ENCODE measurements at regions of chr9 and their contacts with region 1.

Region 1: DNA sequence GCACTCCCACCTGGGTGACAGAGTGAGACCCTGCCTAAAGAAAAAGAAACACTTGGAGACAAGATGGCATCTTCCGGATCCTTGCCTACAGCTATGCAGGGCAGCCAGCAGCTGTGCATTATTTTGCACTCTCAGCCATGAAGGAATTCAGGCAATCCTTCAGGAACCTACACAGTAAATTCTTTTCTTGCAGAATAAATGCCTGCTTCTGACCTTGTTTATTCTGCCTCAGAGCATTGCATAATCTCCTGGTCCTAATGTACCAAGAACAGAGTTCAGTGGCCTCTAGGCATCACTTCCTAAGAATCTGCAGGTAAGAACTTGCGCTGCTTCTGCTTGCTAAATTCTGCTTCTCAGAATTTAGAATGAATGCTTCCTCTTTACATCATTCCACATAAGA is 16.8 kb downstream of the GLDC start:
- DNase-seq: peak; percentile 39 to 57
- H3K4me3 ChIP-seq: no peak overlapping the region
- H3K4me3 Mint-ChIP-seq: no peak overlapping the region
- H3K27ac Mint-ChIP-seq: peak overlapping the region; percentile 47
- H3K4me1 ChIP-seq: peaks cover 62% of the 10 kb centered on the region
- H3K4me1 Mint-ChIP-seq: peaks cover 44% of the 10 kb centered on the region
- H3K27me3 ChIP-seq: no peaks in the 10 kb centered on the region
- H3K27me3 Mint-ChIP-seq: no peaks in the 10 kb centered on the region
- CTCF ChIP-seq: no peak

Region 2: GRCh38 chr9:6592231-6592630 is 36.5 kb before region 1 on chr9:
- CTCF ChIA-PET with region 1: no interaction called
- POLR2A ChIA-PET with region 1: no interaction called
- intact Hi-C with region 1: loop called (anchors 1 kb)
- DNase-seq: peak; percentile 78 to 86
- H3K4me3 ChIP-seq: no peak overlapping the region
- H3K4me3 Mint-ChIP-seq: peak overlapping the region; percentile 30
- H3K27ac Mint-ChIP-seq: peak overlapping the region; percentile 71
- H3K4me1 ChIP-seq: peaks cover 46% of the 10 kb centered on the region
- H3K4me1 Mint-ChIP-seq: peaks cover 58% of the 10 kb centered on the region
- H3K27me3 ChIP-seq: no peaks in the 10 kb centered on the region
- H3K27me3 Mint-ChIP-seq: no peaks in the 10 kb centered on the region
- CTCF ChIP-seq: no peak

Region 3: DNA sequence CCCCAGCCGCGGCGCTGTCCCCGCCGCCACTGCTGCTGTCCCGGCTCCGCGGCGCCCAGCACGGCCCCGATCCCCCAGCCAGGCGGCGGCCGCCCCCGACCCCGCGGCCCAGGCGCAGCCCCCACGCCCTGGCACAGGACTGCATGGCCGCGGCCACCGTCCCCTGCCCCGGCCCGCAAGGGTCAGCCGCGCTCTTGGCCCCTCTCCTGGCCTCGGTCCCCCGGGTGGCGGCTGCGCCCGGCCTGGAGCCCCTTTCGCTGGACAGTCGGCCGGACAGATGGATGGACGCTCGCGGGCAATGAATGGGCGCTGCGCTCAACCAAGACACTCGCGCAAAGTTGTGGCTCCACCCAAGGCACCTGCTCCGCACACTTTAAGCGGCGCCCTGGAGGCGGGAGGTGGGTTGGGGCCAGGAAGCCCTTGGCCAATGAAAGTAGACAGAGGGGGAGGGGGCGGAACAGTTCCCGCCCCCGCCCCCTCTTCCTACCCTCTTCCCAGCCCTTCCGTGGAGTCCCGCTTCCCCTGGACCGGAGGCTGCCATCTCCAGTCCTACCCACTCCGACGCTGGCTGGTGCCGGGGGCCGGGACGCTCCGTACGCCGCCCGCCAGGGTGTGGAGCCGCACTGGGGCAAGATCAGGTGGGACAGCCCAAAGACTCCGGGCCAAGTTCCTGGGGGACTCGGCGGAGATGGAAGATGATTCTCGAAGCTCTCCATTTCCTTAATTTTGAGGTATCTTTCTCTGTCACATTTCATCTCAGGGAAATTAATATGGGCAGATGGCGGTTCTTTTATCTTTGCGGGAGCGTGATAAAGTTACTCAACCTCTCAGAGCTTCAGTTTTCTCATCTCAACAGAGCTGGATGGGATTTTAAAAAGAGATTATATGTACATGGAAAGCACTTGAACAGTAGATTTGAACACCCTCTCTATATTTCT is 16.9 kb after region 1 on chr9 and contains the start of gene GLDC:
- CTCF ChIA-PET with region 1: no interaction called
- POLR2A ChIA-PET with region 1: no interaction called
- intact Hi-C with region 1: loop called (anchors 1 kb)
- DNase-seq: peak; percentile 91 to 94
- H3K4me3 ChIP-seq: peak within 1 kb of the TSS; percentile 70
- H3K4me3 Mint-ChIP-seq: peak within 1 kb of the TSS; percentile 92
- H3K27ac Mint-ChIP-seq: peak within 1 kb of the TSS; percentile 88
- H3K4me1 ChIP-seq: peaks cover 31% of the 10 kb centered on the region
- H3K4me1 Mint-ChIP-seq: peaks cover 28% of the 10 kb centered on the region
- H3K27me3 ChIP-seq: no peaks in the 10 kb centered on the region
- H3K27me3 Mint-ChIP-seq: no peaks in the 10 kb centered on the region
- CTCF ChIP-seq: no peak
- total RNA-seq, gene GLDC: 276 and 320 TPM in 2 replicates

Measured in Caco-2 (cell line).